Mammary epithelial cell (primary cell): ENCODE measurements at regions of chr14 and their contacts with region 1.

Region 1: DNA sequence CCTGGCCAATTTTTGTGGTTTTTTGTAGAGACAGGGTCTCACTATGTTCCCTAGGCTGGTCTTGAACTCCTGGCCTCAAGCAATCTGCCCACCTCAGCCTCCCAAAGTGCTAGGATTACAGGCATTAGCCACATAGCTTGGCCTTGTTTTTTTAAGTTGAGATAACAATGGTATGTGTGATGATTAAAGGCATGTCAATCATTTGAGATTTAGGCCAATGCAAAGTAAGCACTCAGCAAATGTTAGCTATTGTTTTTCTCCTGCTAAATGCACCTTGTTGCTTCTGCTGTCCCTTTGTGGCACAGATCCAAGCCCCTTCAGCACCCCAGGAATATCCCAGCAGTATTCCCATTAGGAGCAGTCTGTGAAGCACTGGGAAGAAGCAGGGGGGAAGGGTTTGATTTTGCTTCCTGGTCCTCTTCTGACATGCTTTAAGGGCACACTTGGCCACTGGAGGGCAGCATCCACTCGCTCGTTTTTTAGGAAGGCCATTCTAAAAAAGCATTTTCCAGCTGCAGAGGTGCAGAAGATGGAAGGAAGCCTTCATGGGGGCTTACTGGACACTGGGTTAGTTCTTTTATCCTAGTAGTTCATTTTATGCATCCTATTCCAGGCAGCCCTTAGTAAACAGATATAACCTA is 70.2 kb upstream of the ZFP36L1 start:
- DNase-seq: peak; percentile 59
- H3K4me3 ChIP-seq: no peak overlapping the region
- H3K27ac ChIP-seq: no peak overlapping the region
- H3K4me1 ChIP-seq: no peaks in the 10 kb centered on the region
- H3K27me3 ChIP-seq: no peaks in the 10 kb centered on the region
- CTCF ChIP-seq: peak; percentile 75 to 84

Region 2: GRCh38 chr14:68834816-68835215 is 28.3 kb before region 1 on chr14:
- CTCF ChIA-PET with region 1: no interaction called
- dilution Hi-C with region 1: no loop called
- in situ Hi-C with region 1: no loop called
- intact Hi-C with region 1: no loop called
- DNase-seq: no peak
- H3K4me3 ChIP-seq: no peak overlapping the region
- H3K27ac ChIP-seq: no peak overlapping the region
- H3K4me1 ChIP-seq: no peaks in the 10 kb centered on the region
- H3K27me3 ChIP-seq: no peaks in the 10 kb centered on the region
- CTCF ChIP-seq: no peak

Region 3: GRCh38 chr14:68891851-68892660 is 29.0 kb after region 1 on chr14:
- CTCF ChIA-PET with region 1: no interaction called
- dilution Hi-C with region 1: no loop called
- in situ Hi-C with region 1: no loop called
- intact Hi-C with region 1: loop called (anchors 2 kb)
- DNase-seq: peak; percentile 62
- H3K4me3 ChIP-seq: no peak overlapping the region
- H3K27ac ChIP-seq: no peak overlapping the region
- H3K4me1 ChIP-seq: peaks cover 65% of the 10 kb centered on the region
- H3K27me3 ChIP-seq: no peaks in the 10 kb centered on the region
- CTCF ChIP-seq: no peak

Region 4: GRCh38 chr14:69107407-69108003 is 244.4 kb after region 1 on chr14:
- CTCF ChIA-PET with region 1: interaction called, 4 read pairs
- dilution Hi-C with region 1: no loop called
- in situ Hi-C with region 1: no loop called
- intact Hi-C with region 1: loop called (anchors 1 kb)
- DNase-seq: peak; percentile 63
- H3K4me3 ChIP-seq: no peak overlapping the region
- H3K27ac ChIP-seq: no peak overlapping the region
- H3K4me1 ChIP-seq: peaks cover 16% of the 10 kb centered on the region
- H3K27me3 ChIP-seq: no peaks in the 10 kb centered on the region
- CTCF ChIP-seq: peak; percentile 75 to 78